Common myeloid progenitor, CD34-positive (primary cell): ENCODE measurements at regions of chr9 and their contacts with region 1.

Region 1: GRCh38 chr9:90921111-90921510 is 119.5 kb downstream of the SYK start:
- DNase-seq: no peak
- H3K4me3 ChIP-seq: no peak overlapping the region
- H3K27ac ChIP-seq: no peak overlapping the region
- H3K4me1 ChIP-seq: peaks cover 0 to 5% (median 2%) of the 10 kb centered on the region in 4 experiments
- H3K27me3 ChIP-seq: no peaks in the 10 kb centered on the region

Region 2: DNA sequence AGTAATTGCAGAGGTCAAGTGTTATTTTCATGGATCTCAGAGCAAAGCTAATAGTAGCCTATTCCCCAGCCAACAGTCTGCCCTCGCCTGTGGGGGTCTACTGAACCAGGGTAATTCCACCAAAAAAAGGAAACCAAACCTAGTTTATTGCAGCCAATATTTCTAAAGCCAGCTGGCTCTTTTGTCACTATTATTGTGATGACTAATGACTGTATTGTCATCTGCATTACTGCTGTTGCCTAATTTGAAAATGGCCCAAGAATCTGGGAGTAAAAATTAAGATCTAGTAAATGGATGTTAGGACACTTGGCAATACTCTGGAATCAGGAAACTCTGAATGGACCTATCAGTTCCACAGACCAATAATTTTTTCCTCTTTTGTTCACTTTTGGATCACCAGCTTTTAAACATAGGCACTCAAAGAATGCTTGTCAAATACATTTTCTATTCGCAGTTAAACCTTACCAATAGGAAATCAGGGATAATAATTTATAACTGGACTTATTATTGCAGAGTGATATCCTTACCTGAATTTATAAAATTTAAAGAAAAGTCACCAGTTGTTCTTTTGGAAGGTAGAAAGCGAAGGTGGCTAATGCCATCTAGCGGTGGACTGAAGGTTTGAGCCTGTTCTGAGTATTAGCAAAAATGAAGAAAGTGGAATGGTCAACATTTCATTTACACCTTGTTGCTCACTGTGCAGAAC is 50.3 kb before region 1 on chr9:
- CTCF ChIA-PET with region 1: no interaction called
- POLR2A ChIA-PET with region 1: no interaction called
- DNase-seq: peak; percentile 50 to 76 (median 65)
- H3K4me3 ChIP-seq: no peak overlapping the region
- H3K27ac ChIP-seq: peak overlapping the region in 1 of 2 experiments; percentile 49
- H3K4me1 ChIP-seq: no peaks in the 10 kb centered on the region
- H3K27me3 ChIP-seq: no peaks in the 10 kb centered on the region

Region 3: GRCh38 chr9:90894986-90895687 is 26.0 kb before region 1 on chr9:
- CTCF ChIA-PET with region 1: interaction called, 10 read pairs
- POLR2A ChIA-PET with region 1: interaction called, 12 read pairs
- DNase-seq: peak in 2 of 3 donors; percentile 38 to 43
- H3K4me3 ChIP-seq: no peak overlapping the region
- H3K27ac ChIP-seq: no peak overlapping the region
- H3K4me1 ChIP-seq: no peaks in the 10 kb centered on the region
- H3K27me3 ChIP-seq: no peaks in the 10 kb centered on the region